ENCODE measurements at regions of chr11 and their contacts with region 1.

Region 1: GRCh38 chr11:93234602-93235207 is 36.9 kb upstream of the SLC36A4 start:
- DNase-seq: peak; percentile 27 to 56 (median 35)
- H3K4me3 ChIP-seq: no peak overlapping the region
- H3K4me3 Mint-ChIP-seq: no peak overlapping the region
- H3K27ac ChIP-seq: no peak overlapping the region
- H3K27ac Mint-ChIP-seq: no peak overlapping the region
- H3K4me1 ChIP-seq: no peaks in the 10 kb centered on the region
- H3K4me1 Mint-ChIP-seq: no peaks in the 10 kb centered on the region
- H3K27me3 ChIP-seq: no peaks in the 10 kb centered on the region
- H3K27me3 Mint-ChIP-seq: peaks cover 10 to 35% of the 10 kb centered on the region in 2 donors

Region 2: GRCh38 chr11:93084727-93085505 is 149.8 kb before region 1 on chr11:
- CTCF ChIA-PET with region 1: no interaction called
- POLR2A ChIA-PET with region 1: no interaction called
- DNase-seq: no peak
- H3K4me3 ChIP-seq: no peak overlapping the region
- H3K4me3 Mint-ChIP-seq: no peak overlapping the region
- H3K27ac ChIP-seq: no peak overlapping the region
- H3K27ac Mint-ChIP-seq: no peak overlapping the region
- H3K4me1 ChIP-seq: no peaks in the 10 kb centered on the region
- H3K4me1 Mint-ChIP-seq: no peaks in the 10 kb centered on the region
- H3K27me3 ChIP-seq: no peaks in the 10 kb centered on the region
- H3K27me3 Mint-ChIP-seq: no peaks in the 10 kb centered on the region

Region 3: GRCh38 chr11:93303689-93304088 is 69.0 kb after region 1 on chr11:
- CTCF ChIA-PET with region 1: no interaction called
- POLR2A ChIA-PET with region 1: no interaction called
- DNase-seq: no peak
- H3K4me3 ChIP-seq: no peak overlapping the region
- H3K4me3 Mint-ChIP-seq: no peak overlapping the region
- H3K27ac ChIP-seq: no peak overlapping the region
- H3K27ac Mint-ChIP-seq: no peak overlapping the region
- H3K4me1 ChIP-seq: no peaks in the 10 kb centered on the region
- H3K4me1 Mint-ChIP-seq: no peaks in the 10 kb centered on the region
- H3K27me3 ChIP-seq: no peaks in the 10 kb centered on the region
- H3K27me3 Mint-ChIP-seq: peaks cover 4% of the 10 kb centered on the region in 2 donors

Region 4: GRCh38 chr11:93652161-93652597 is 417.5 kb after region 1 on chr11:
- CTCF ChIA-PET with region 1: interaction called, 18 read pairs
- POLR2A ChIA-PET with region 1: no interaction called
- DNase-seq: peak in 2 of 5 donors; percentile 23 to 36
- H3K4me3 ChIP-seq: no peak overlapping the region
- H3K4me3 Mint-ChIP-seq: no peak overlapping the region
- H3K27ac ChIP-seq: no peak overlapping the region
- H3K27ac Mint-ChIP-seq: peak overlapping the region in 1 of 8 donors; percentile 41
- H3K4me1 ChIP-seq: no peaks in the 10 kb centered on the region
- H3K4me1 Mint-ChIP-seq: peaks cover 0 to 11% (median 0%) of the 10 kb centered on the region in 3 donors
- H3K27me3 ChIP-seq: no peaks in the 10 kb centered on the region
- H3K27me3 Mint-ChIP-seq: peaks cover 0 to 32% of the 10 kb centered on the region in 2 donors

Measured in CD8-positive, alpha-beta memory T cell (primary cell).